ENCODE measurements at regions of chr6 and their contacts with region 1.

Region 1: GRCh38 chr6:130293800-130294199 is 71.0 kb upstream of the SAMD3 start:
- DNase-seq: peak; percentile 19
- H3K4me3 ChIP-seq: no peak overlapping the region
- CTCF ChIP-seq: peak; percentile 73

Region 2: DNA sequence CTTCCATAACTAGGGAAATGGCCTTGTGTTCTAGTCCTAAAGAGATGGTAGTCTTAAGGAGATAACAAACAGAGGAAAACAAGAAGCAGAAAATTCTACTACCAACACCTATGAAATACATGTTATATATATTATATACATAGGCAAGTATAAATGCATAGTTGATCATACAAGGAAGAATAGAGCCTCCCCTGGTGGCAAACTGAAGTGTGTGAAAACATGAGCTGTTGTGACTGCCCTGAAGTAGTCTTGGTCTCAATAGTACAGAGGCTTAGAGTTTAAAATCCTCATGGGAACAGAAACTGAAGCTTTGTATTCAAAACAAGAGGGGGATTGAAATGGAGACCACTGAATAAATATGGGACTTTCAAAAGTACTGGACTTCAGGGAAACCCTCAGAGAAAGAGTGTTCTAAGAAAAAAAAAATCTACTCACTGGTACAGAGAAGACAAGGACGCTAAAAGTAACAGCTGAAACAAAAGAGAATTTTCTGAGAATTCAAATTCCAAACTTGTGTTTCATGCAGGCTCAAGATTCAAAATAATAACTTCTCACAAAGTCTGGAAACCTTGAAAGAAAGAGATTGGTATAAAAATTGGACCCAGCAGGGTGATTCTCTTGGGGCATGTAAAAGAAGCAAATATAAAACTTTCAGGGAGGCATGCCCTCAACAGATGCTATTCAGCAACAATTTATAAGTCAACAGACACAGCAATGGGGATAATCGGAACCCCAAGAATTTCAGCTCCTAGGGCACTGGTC is 11.4 kb before region 1 on chr6:
- CTCF ChIA-PET with region 1: interaction called, 52 read pairs
- POLR2A ChIA-PET with region 1: no interaction called
- DNase-seq: no peak
- H3K4me3 ChIP-seq: no peak overlapping the region
- CTCF ChIP-seq: peak; percentile 55

Region 3: GRCh38 chr6:130697995-130698535 is 404.3 kb after region 1 on chr6:
- CTCF ChIA-PET with region 1: interaction called, 10 read pairs
- POLR2A ChIA-PET with region 1: no interaction called
- DNase-seq: no peak
- H3K4me3 ChIP-seq: no peak overlapping the region
- CTCF ChIP-seq: peak; percentile 69

Region 4: DNA sequence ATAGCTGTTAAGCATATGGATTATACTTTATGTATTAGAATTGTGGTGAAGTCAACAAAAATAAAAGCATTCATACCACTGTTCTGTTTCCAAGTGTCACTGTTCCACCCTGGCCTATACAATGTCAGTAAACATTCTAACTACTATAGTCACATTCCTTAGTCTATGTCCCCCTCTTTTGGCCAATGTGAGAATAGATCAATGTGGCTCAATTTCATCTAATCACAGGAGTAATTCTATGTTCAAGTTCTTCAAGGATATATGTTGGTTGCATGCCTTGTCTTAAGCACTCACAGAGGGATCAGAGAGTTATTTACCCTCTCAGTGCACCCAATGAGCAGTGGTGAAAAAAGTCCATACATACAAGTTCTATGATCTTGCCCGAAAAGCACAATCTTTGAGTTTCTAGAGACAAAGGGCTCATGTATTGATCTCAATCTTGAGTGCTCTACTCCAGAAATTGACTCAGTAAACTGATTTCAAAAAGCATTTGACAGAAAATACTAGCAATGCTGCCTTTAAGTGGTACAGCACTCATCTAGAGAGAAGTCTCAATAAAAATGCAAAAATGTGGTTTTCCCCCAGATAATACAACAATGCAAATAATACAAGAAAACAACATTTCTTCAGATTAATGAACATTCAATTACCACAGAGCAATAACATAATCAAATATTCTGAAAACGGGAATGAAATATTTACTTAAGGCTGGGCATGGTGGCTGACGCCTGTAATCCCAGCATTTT is 549.9 kb after region 1 on chr6:
- CTCF ChIA-PET with region 1: interaction called, 18 read pairs
- POLR2A ChIA-PET with region 1: no interaction called
- DNase-seq: no peak
- H3K4me3 ChIP-seq: no peak overlapping the region
- CTCF ChIP-seq: peak; percentile 59